Activated CD4-positive, alpha-beta memory T cell treated with anti-CD3 and anti-CD28 coated beads, Interleukin-2, amount 10 ng/mL, durations not matched to agents 7 days and 5 days (primary cell): ENCODE measurements at regions of chr5 and their contacts with region 1.

Region 1: DNA sequence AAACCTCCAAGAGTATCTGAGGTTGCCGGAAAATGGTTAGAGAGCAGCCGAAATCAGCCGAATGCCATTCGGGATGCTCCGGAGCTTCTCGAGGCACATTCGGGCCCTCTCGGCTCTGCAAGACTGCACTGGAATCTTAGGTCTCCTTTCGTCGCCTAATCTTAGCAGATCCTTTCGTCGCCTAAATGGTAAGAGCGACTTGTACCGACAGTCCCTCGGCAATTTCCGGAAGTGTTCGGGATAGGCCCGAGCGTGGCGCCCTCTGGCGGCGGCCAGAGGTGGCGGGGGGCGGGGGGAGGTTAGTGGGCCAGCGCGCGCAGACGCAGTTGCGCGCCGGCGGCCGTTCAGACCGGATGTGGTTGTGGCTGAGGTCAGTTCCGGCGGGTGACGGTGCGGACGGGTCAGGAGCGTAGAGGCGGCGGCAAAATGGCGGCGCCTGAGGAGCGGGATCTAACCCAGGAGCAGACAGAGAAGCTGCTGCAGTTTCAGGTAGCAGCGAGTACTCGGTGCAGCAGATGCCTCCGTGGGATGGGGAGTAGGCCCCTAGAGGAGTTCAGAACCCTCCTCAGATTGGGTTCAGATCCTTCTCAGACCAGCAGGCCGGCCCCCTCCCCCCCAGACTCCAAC is at the start of gene FAF2:
- DNase-seq: peak; percentile 98
- H3K4me3 Mint-ChIP-seq: peak within 1 kb of the TSS; percentile 98
- H3K27ac Mint-ChIP-seq: peak within 1 kb of the TSS; percentile 96
- H3K4me1 Mint-ChIP-seq: peaks cover 39% of the 10 kb centered on the region
- H3K27me3 Mint-ChIP-seq: peaks cover 2% of the 10 kb centered on the region
- total RNA-seq, gene FAF2: 36.2 to 38.7 TPM

Region 2: GRCh38 chr5:176397736-176398420 is 50.2 kb before region 1 on chr5:
- CTCF ChIA-PET with region 1: no interaction called
- POLR2A ChIA-PET with region 1: no interaction called
- DNase-seq: no peak
- H3K4me3 Mint-ChIP-seq: no peak overlapping the region
- H3K27ac Mint-ChIP-seq: no peak overlapping the region
- H3K4me1 Mint-ChIP-seq: no peaks in the 10 kb centered on the region
- H3K27me3 Mint-ChIP-seq: no peaks in the 10 kb centered on the region

Region 3: GRCh38 chr5:176415952-176416924 is 31.9 kb before region 1 on chr5 and contains the start of gene CLTB:
- CTCF ChIA-PET with region 1: interaction called, 22 read pairs
- POLR2A ChIA-PET with region 1: interaction called, 18 read pairs
- DNase-seq: peak; percentile 91
- H3K4me3 Mint-ChIP-seq: peak within 1 kb of the TSS; percentile 82
- H3K27ac Mint-ChIP-seq: peak within 1 kb of the TSS; percentile 71
- H3K4me1 Mint-ChIP-seq: peaks cover 39% of the 10 kb centered on the region
- H3K27me3 Mint-ChIP-seq: peaks cover 10% of the 10 kb centered on the region
- total RNA-seq, gene CLTB: 56.2 to 57.2 TPM

Region 4: GRCh38 chr5:176436661-176437071 is 11.4 kb before region 1 on chr5:
- CTCF ChIA-PET with region 1: interaction called, 16 read pairs
- POLR2A ChIA-PET with region 1: interaction called, 9 read pairs
- DNase-seq: no peak
- H3K4me3 Mint-ChIP-seq: peak overlapping the region; percentile 58
- H3K27ac Mint-ChIP-seq: peak overlapping the region; percentile 53
- H3K4me1 Mint-ChIP-seq: peaks cover 13% of the 10 kb centered on the region
- H3K27me3 Mint-ChIP-seq: peaks cover 15% of the 10 kb centered on the region

Region 5: DNA sequence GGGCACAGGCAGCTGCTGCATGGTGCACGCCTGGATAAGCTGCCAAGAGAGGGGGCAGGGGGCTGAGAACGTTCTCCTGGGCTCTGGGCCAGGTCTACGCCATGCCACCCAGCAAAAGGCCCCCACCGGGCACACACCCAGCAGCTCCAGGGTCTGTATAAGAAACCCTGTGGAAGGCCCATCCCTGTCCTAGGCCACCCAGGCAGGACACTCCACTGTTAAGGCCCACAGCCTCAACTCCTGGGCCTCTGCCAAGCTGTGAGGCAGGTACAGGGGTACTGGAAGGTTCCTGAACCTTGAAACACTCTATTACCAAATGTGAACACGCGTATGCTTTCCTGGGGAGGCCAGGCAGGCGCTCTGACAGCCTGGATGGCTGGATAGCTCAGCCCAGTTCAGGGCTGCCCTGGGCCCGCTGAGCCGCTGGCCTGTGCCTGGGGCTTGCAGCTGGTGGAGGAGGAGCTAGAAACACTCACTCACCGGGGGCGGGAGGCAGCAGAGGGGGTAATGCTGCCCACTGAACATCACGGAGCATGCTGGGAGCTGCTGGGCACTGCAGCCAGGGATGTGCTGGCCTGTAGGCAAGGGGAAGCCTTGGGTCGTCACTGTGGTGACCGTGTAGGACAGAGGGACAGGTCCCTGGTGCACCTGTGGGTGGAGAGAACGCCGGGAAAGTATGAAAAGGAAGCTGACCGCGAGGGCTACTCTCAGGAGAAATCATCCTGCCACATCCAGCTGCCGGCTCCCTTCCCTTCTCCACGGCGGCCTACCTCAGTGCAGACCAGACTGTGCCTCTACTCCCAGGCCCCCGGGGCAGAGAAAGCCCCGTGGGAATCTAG is 83.1 kb after region 1 on chr5:
- CTCF ChIA-PET with region 1: interaction called, 73 read pairs
- POLR2A ChIA-PET with region 1: interaction called, 156 read pairs
- DNase-seq: no peak
- H3K4me3 Mint-ChIP-seq: peak overlapping the region; percentile 84
- H3K27ac Mint-ChIP-seq: peak overlapping the region; percentile 93
- H3K4me1 Mint-ChIP-seq: peaks cover 59% of the 10 kb centered on the region
- H3K27me3 Mint-ChIP-seq: no peaks in the 10 kb centered on the region

Region 6: GRCh38 chr5:176543428-176544173 is 95.5 kb after region 1 on chr5:
- CTCF ChIA-PET with region 1: interaction called, 73 read pairs
- POLR2A ChIA-PET with region 1: interaction called, 156 read pairs
- DNase-seq: peak; percentile 84
- H3K4me3 Mint-ChIP-seq: peak overlapping the region; percentile 91
- H3K27ac Mint-ChIP-seq: peak overlapping the region; percentile 83
- H3K4me1 Mint-ChIP-seq: peaks cover 69% of the 10 kb centered on the region
- H3K27me3 Mint-ChIP-seq: no peaks in the 10 kb centered on the region

Region 7: DNA sequence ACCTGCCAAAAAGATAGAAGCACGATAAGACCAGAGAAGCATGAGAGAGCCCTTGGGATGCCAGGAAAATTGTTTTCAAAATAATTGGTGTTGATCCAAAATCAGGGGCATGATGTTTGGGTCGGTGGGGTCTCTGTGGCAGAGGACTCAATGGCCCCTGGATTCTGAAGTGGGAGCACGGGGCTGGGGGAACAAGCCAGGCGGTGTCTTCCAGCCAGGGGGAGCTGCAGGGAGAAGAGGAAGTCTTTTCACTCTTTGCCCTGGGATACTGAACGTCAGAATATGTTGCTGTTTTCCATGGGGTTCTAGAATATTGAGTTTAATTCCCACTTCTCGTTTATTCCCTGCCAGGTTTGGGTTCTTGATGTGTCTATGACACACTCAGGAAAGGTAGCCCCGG is 219.5 kb after region 1 on chr5:
- CTCF ChIA-PET with region 1: no interaction called
- POLR2A ChIA-PET with region 1: no interaction called
- DNase-seq: no peak
- H3K4me3 Mint-ChIP-seq: no peak overlapping the region
- H3K27ac Mint-ChIP-seq: no peak overlapping the region
- H3K4me1 Mint-ChIP-seq: no peaks in the 10 kb centered on the region
- H3K27me3 Mint-ChIP-seq: peaks cover 23% of the 10 kb centered on the region